Heart left ventricle (tissue), 16 donors: ENCODE measurements at regions of chr5 and their contacts with region 1.

Region 1: GRCh38 chr5:61666064-61666621 is 334.1 kb downstream of the ZSWIM6 start:
- DNase-seq: peak in 4 of 5 donors; percentile 33 to 35 (median 34)
- ATAC-seq: peak; percentile 64 to 82 (median 76)
- H3K4me3 ChIP-seq: peak overlapping the region in 6 of 12 donors; percentile 4 to 19 (median 12)
- H3K27ac ChIP-seq: peak overlapping the region in 8 of 12 donors; percentile 7 to 77 (median 30)
- H3K4me1 ChIP-seq: peaks cover 0 to 29% (median 3%) of the 10 kb centered on the region in 12 donors
- H3K27me3 ChIP-seq: no peaks in the 10 kb centered on the region
- CTCF ChIP-seq: no peak
- POLR2A ChIP-seq: no peak

Region 2: GRCh38 chr5:60960591-60960990 is 705.6 kb before region 1 on chr5:
- intact Hi-C with region 1: loop called in 2 of 10 experiments (anchors 10 kb)
- DNase-seq: no peak
- ATAC-seq: no peak
- H3K4me3 ChIP-seq: no peak overlapping the region
- H3K27ac ChIP-seq: no peak overlapping the region
- H3K4me1 ChIP-seq: peaks cover 0 to 14% (median 0%) of the 10 kb centered on the region in 12 donors
- H3K27me3 ChIP-seq: no peaks in the 10 kb centered on the region
- CTCF ChIP-seq: peak in 10 of 12 donors; percentile 19 to 55 (median 38)
- POLR2A ChIP-seq: no peak

Region 3: DNA sequence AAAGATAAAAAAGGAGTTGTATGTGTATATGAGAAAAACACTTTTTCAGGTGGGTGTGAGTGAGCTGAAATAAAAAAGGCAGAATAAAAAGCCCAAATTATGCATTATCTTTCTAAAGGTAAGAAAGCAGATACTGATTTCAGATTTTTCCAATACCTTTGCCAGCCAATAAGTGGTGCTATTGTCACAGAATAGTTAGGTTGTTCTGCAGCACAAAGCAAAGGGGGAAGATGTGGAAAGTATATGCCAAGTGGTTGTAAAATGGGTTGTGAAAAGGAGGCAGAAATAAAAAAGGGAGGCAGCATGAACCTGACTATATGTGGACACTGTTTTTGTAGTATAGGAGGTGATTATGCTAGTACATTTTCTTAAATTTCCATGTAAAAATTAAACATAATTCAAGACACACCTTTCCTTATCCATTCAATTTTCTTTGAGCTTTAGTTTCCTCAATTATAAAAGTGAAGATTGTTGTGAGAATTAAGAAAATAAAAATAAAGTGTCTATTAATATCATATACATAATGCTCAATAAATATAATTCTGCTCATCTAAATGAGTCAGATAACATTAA is 610.6 kb before region 1 on chr5:
- intact Hi-C with region 1: loop called in 2 of 10 experiments (anchors 5 to 10 kb)
- DNase-seq: no peak
- ATAC-seq: no peak
- H3K4me3 ChIP-seq: no peak overlapping the region
- H3K27ac ChIP-seq: no peak overlapping the region
- H3K4me1 ChIP-seq: peaks cover 0 to 3% (median 0%) of the 10 kb centered on the region in 12 donors
- H3K27me3 ChIP-seq: no peaks in the 10 kb centered on the region
- CTCF ChIP-seq: peak; percentile 36 to 69 (median 58)
- POLR2A ChIP-seq: no peak

Region 4: GRCh38 chr5:61408476-61409168 is 257.5 kb before region 1 on chr5:
- intact Hi-C with region 1: loop called in 1 of 10 experiments (anchors 10 kb)
- DNase-seq: peak; percentile 99 to 100 (median 100)
- ATAC-seq: peak; percentile 100
- H3K4me3 ChIP-seq: peak overlapping the region in 9 of 12 donors; percentile 6 to 50 (median 33)
- H3K27ac ChIP-seq: peak overlapping the region in 9 of 12 donors; percentile 4 to 74 (median 36)
- H3K4me1 ChIP-seq: peaks cover 3 to 38% (median 19%) of the 10 kb centered on the region in 12 donors
- H3K27me3 ChIP-seq: no peaks in the 10 kb centered on the region
- CTCF ChIP-seq: peak in 1 of 12 donors; percentile 9
- POLR2A ChIP-seq: peak in 1 of 2 donors; percentile 14

Region 5: GRCh38 chr5:61625681-61626621 is 40.2 kb before region 1 on chr5:
- intact Hi-C with region 1: loop called in 1 of 10 experiments (anchors 5 kb)
- DNase-seq: peak; percentile 79 to 91 (median 87)
- ATAC-seq: peak; percentile 94 to 98 (median 98)
- H3K4me3 ChIP-seq: peak overlapping the region; percentile 35 to 74 (median 64)
- H3K27ac ChIP-seq: peak overlapping the region; percentile 61 to 96 (median 90)
- H3K4me1 ChIP-seq: peaks cover 0 to 30% (median 15%) of the 10 kb centered on the region in 12 donors
- H3K27me3 ChIP-seq: no peaks in the 10 kb centered on the region
- CTCF ChIP-seq: peak in 2 of 12 donors; percentile 13 to 15
- POLR2A ChIP-seq: peak in 1 of 2 donors; percentile 43